ENCODE measurements at regions of chr6 and their contacts with region 1.

Region 1: DNA sequence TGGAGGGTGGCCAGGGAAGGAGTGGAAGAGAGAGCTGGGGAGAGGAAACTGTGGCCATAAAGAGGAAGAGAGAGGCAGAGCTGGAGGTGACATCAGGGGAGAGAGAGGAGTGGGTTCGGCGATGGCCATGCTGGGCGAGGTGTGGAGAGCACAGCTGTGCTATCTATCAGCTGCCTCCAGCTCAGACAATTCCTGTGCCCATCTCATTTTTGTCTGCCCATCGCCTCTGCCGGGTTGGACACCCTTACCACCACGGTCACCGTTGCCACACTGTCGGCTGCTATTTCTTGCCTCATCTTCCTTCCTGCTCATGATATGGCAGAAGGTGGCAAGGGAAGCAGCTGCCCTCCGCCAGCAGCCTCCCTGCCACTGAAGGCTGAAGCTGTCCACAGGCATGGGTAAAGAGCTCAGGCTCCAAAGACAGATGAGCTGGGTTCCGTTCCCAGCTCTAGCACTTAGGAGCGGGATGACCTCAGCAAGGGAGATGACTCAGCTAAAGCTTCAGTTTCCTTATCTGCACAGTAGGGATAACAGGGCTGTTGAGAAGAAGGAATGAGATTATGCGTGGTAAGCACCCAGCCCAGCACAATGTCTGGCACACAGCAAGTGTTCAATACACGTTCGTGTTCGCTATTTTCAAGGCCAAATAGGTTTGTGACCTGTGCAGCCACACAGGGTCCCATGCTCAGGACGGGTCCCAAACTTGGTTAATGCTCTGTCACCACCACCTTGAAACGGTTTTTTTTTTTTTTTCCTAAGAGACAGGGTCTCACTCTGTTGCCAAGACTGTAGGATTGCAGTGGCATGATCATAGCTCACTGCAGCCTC is 21.9 kb upstream of the TAF8 start:
- DNase-seq: no peak
- ATAC-seq: no peak
- H3K4me3 ChIP-seq: no peak overlapping the region
- H3K27ac ChIP-seq: peak overlapping the region; percentile 13; the same call in 1 of the 2 replicates
- H3K4me1 ChIP-seq: peaks cover 50% of the 10 kb centered on the region
- H3K27me3 ChIP-seq: no peaks in the 10 kb centered on the region
- CTCF ChIP-seq: no peak
- EP300 ChIP-seq: no peak
- POLR2A ChIP-seq: no peak
- RAD21 ChIP-seq: no peak

Region 2: GRCh38 chr6:41941280-41942066 is 87.0 kb before region 1 on chr6 and contains the start of gene CCND3:
- CTCF ChIA-PET with region 1: interaction called, 5 read pairs
- POLR2A ChIA-PET with region 1: interaction called, 3 read pairs
- RAD21 ChIA-PET with region 1: interaction called, 12 read pairs
- SMC1A ChIA-PET with region 1: interaction called, 8 read pairs
- in situ Hi-C with region 1: no loop called
- intact Hi-C with region 1: loop called (anchors 5 kb)
- DNase-seq: peak; percentile 44
- ATAC-seq: peak; percentile 94
- H3K4me3 ChIP-seq: peak within 1 kb of the TSS; percentile 98
- H3K27ac ChIP-seq: peak within 1 kb of the TSS; percentile 61
- H3K4me1 ChIP-seq: peaks cover 29% of the 10 kb centered on the region
- H3K27me3 ChIP-seq: no peaks in the 10 kb centered on the region
- CTCF ChIP-seq: no peak
- EP300 ChIP-seq: no peak
- POLR2A ChIP-seq: peak; percentile 27; the same call in 1 of the 2 replicates
- RAD21 ChIP-seq: no peak
- polyA plus RNA-seq, gene CCND3: 6.0 to 16.3 TPM

Region 3: GRCh38 chr6:42038811-42039408 is 10.5 kb after region 1 on chr6:
- CTCF ChIA-PET with region 1: interaction called, 12 read pairs
- POLR2A ChIA-PET with region 1: interaction called, 6 read pairs
- RAD21 ChIA-PET with region 1: interaction called, 15 read pairs
- SMC1A ChIA-PET with region 1: interaction called, 11 read pairs
- in situ Hi-C with region 1: no loop called
- intact Hi-C with region 1: no loop called
- DNase-seq: no peak
- ATAC-seq: no peak
- H3K4me3 ChIP-seq: 0 out of 2 replicates have a peak overlapping the region, but pooled peaks have one; percentile 2
- H3K27ac ChIP-seq: peak overlapping the region; percentile 52
- H3K4me1 ChIP-seq: peaks cover 15% of the 10 kb centered on the region
- H3K27me3 ChIP-seq: no peaks in the 10 kb centered on the region
- CTCF ChIP-seq: no peak
- EP300 ChIP-seq: no peak
- POLR2A ChIP-seq: no peak
- RAD21 ChIP-seq: no peak

Region 4: DNA sequence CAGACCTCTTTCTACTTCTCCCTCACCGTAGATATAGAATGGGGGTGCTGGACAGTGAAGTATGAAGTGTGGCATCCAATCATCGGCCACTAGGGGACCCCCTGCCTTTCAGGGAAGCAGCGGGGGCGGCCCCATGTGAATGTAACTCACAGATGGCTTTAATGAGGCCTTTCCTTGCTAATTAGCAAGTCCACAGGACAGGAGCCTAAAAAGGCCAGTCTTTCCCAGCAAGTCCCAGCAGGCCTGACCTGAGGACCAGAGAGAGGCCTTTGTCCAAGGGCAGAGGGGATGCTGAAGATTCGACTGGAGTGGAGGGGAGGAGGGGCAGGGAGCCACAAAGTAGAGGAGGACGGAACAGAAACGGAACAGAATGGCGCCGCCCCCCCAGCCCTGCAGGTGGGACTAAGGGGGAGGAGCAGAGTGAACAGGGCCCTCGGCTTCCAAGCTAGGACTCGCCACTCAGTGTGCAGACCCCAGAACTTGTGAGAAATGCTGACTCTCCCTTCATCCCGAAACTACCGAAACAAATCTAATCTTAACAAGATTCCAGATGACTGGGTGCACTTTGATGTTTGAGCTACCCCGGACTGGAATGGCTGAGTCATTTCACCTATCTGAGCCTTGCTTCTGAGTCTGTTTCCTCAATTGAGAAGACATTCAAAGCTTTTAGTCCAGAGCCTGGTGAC is 108.2 kb after region 1 on chr6:
- CTCF ChIA-PET with region 1: no interaction called
- POLR2A ChIA-PET with region 1: no interaction called
- RAD21 ChIA-PET with region 1: no interaction called
- SMC1A ChIA-PET with region 1: no interaction called
- in situ Hi-C with region 1: no loop called
- intact Hi-C with region 1: no loop called
- DNase-seq: peak; percentile 11
- ATAC-seq: peak; percentile 84
- H3K4me3 ChIP-seq: 0 out of 2 replicates have a peak overlapping the region, but pooled peaks have one; percentile 33
- H3K27ac ChIP-seq: no peak overlapping the region
- H3K4me1 ChIP-seq: peaks cover 4% of the 10 kb centered on the region; the same call in 1 of the 2 replicates
- H3K27me3 ChIP-seq: no peaks in the 10 kb centered on the region; a peak in 3 of 4 replicates
- CTCF ChIP-seq: peak; percentile 42 to 48 (median 44); a peak in 4 of 6 replicates
- EP300 ChIP-seq: no peak
- POLR2A ChIP-seq: no peak
- RAD21 ChIP-seq: peak; percentile 25; the same call in 1 of the 2 replicates

Measured in GM12878 (cell line).